PC-3 (cell line): ENCODE measurements at regions of chr19 and their contacts with region 1.

Region 1: DNA sequence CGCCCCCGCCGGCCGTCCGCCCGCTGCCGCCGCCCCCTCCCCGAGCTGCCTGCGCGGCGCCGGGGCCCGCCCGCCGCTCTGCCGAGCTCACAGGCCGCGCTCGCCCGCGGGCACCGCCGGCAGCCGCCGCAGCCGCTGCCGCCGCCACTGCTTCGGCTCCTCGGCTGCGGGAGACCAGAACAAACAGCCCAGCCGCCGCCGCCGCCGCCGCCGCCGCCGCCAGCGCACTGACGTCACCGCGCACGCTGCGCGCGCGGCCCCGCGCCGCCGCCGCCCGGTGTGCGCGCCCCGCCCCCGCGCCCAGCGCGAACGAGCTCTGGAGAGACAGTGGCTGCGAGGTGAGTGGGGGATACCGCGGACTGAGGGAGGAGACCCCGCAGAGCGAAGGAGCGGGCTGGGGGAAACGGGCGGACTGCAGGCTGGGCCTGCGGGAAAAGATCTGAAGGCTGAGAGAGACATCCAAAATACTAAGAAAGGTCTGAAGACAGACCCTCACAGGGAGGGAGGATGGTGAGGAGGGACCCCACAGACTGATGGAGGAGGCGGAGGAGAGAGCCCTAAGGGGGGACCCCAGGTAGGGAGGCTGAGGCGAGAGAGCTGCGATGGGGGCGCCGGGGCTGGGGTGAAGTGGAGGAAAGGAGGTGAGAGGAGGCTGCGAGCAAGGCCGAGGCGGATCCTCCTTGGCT is at the start of gene BRD4:
- DNase-seq: peak; percentile 62
- ATAC-seq: peak; percentile 46
- H3K4me3 ChIP-seq: peak within 1 kb of the TSS; percentile 99
- H3K27ac ChIP-seq: peak within 1 kb of the TSS; percentile 81
- H3K4me1 ChIP-seq: peaks cover 27% of the 10 kb centered on the region
- H3K27me3 ChIP-seq: no peaks in the 10 kb centered on the region
- CTCF ChIP-seq: no peak
- total RNA-seq, gene BRD4: 20.9 and 46.4 TPM in 2 replicates

Region 2: GRCh38 chr19:15234043-15234873 is 98.2 kb before region 1 on chr19:
- CTCF ChIA-PET with region 1: no interaction called
- POLR2A ChIA-PET with region 1: no interaction called
- intact Hi-C with region 1: no loop called
- DNase-seq: peak; percentile 93
- ATAC-seq: peak; percentile 80
- H3K4me3 ChIP-seq: no peak overlapping the region
- H3K27ac ChIP-seq: peak overlapping the region; percentile 92
- H3K4me1 ChIP-seq: peaks cover 22% of the 10 kb centered on the region
- H3K27me3 ChIP-seq: no peaks in the 10 kb centered on the region
- CTCF ChIP-seq: no peak

Region 3: DNA sequence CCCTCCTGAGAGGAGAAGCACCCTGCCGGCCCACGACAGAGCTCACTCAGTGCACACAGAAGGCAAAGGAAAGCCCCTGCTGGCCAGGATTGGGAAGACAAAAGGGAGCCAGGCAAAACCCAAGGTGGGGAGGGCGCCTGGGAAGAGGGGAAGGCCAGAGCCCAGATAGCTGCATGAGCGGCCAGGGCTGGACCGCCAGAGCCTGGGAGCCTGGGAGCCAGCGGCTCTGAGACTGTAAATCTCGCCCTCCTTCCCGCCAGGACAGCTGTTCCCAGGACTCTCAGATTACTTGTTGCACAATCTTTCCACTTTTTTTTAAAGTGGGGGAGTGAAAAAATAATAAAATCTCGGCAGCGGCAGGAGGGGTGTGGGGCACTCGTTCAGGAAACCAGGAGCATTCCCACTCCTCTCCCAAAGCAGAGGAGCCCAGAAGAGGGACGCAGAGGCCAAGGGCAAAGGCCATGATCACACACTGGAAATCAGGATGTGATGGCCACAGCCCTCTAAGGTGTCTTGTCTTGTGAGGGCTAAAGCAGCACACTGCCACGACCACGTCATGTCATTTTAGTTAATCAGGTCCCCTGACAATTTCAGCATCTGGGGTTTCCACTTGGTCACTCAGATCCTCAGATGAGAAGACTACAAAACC is 80.6 kb before region 1 on chr19:
- CTCF ChIA-PET with region 1: no interaction called
- POLR2A ChIA-PET with region 1: no interaction called
- intact Hi-C with region 1: no loop called
- DNase-seq: peak; percentile 55
- ATAC-seq: peak; percentile 36
- H3K4me3 ChIP-seq: no peak overlapping the region
- H3K27ac ChIP-seq: peak overlapping the region; percentile 60
- H3K4me1 ChIP-seq: peaks cover 31% of the 10 kb centered on the region
- H3K27me3 ChIP-seq: no peaks in the 10 kb centered on the region
- CTCF ChIP-seq: peak; percentile 55

Region 4: GRCh38 chr19:15264061-15264932 is 68.2 kb before region 1 on chr19:
- CTCF ChIA-PET with region 1: no interaction called
- POLR2A ChIA-PET with region 1: no interaction called
- intact Hi-C with region 1: loop called (anchors 5 kb)
- DNase-seq: peak; percentile 73
- ATAC-seq: peak; percentile 10; the same call in 1 of the 2 replicates
- H3K4me3 ChIP-seq: no peak overlapping the region
- H3K27ac ChIP-seq: no peak overlapping the region
- H3K4me1 ChIP-seq: 0 out of 2 replicates have a peak, but pooled peaks cover 6% of the 10 kb centered on the region
- H3K27me3 ChIP-seq: no peaks in the 10 kb centered on the region
- CTCF ChIP-seq: peak; percentile 91

Region 5: DNA sequence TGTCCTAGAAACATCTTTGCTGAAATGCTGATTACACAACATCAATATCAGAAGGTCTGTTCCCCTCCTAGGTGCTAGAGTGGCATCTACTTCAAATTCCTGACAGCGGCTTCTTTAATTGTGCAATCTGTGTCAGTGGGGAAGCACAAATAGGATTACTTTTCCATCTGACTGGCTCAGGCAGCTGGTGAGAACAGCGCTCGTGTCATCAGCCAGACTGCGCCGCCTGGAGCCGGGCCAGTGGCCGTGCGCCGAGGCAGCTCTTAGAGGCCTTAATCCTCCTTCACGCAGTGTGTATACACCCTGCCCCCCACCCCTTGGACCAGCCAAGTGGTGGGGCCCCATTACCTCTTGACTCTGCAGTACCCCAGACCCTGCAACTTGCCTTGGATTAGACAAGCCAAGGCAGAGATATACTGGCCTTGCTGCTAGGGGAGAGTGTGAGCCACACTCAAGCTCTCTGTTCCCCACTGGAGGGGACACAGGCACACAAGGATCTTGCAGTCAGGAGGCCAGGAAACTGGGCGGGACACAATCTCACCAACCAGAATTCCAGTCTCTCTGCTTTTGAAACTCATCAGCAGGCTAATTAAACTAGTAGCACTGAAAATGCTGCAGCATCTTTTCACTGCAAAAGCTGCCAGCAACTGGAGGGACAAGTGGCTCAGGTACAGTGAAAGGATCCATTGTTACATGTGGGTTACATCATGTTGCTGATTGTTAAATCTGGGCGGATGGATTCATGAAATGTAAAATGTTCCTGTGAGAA is 51.4 kb before region 1 on chr19:
- CTCF ChIA-PET with region 1: no interaction called
- POLR2A ChIA-PET with region 1: interaction called, 3 read pairs
- intact Hi-C with region 1: loop called (anchors 1 kb)
- DNase-seq: peak; percentile 23
- ATAC-seq: peak; percentile 17; the same call in 1 of the 2 replicates
- H3K4me3 ChIP-seq: no peak overlapping the region
- H3K27ac ChIP-seq: no peak overlapping the region
- H3K4me1 ChIP-seq: peaks cover 37% of the 10 kb centered on the region
- H3K27me3 ChIP-seq: no peaks in the 10 kb centered on the region
- CTCF ChIP-seq: no peak

Region 6: DNA sequence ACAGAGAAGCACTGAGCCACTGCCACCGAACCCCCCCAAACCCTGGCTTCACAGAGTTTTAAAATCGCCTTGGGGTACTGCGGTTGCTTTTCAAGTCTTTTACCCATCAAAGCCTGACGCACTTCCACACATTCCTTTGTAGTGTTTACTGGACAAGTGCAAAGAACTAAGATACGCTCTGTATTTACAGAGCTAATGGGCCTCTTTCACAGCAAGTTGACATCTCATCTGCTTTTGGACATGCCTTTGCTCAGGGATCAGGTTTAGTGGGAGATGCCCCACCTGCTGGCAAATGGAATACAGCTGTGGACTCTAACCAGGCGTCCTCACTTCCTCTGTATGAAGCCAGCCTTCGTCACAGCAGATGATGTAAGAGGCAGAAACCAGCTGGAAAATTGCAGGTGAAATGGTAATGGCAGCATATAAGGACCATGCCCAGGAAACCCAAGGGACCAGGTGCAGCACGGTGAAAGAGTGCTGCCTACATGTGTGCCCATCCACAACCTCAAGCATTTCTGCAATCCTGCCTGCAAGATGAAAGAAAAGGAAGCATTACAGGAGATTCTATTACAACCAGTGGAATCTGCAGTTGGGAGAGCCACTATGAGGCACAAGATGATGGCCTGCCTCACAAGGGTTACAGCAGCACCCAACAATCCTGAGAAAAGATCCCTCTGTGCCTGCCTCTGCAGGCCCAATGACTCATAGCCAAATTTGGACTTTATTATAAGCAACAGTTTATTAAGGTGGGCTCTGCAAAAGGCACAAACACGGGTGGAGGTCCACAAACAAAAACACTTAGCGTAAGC is 34.8 kb before region 1 on chr19:
- CTCF ChIA-PET with region 1: no interaction called
- POLR2A ChIA-PET with region 1: interaction called, 4 read pairs
- intact Hi-C with region 1: loop called (anchors 5 kb)
- DNase-seq: peak; percentile 47
- ATAC-seq: peak; percentile 77
- H3K4me3 ChIP-seq: peak overlapping the region; percentile 23; the same call in 1 of the 2 replicates
- H3K27ac ChIP-seq: peak overlapping the region; percentile 77
- H3K4me1 ChIP-seq: peaks cover 37% of the 10 kb centered on the region
- H3K27me3 ChIP-seq: no peaks in the 10 kb centered on the region
- CTCF ChIP-seq: peak; percentile 50

Region 7: DNA sequence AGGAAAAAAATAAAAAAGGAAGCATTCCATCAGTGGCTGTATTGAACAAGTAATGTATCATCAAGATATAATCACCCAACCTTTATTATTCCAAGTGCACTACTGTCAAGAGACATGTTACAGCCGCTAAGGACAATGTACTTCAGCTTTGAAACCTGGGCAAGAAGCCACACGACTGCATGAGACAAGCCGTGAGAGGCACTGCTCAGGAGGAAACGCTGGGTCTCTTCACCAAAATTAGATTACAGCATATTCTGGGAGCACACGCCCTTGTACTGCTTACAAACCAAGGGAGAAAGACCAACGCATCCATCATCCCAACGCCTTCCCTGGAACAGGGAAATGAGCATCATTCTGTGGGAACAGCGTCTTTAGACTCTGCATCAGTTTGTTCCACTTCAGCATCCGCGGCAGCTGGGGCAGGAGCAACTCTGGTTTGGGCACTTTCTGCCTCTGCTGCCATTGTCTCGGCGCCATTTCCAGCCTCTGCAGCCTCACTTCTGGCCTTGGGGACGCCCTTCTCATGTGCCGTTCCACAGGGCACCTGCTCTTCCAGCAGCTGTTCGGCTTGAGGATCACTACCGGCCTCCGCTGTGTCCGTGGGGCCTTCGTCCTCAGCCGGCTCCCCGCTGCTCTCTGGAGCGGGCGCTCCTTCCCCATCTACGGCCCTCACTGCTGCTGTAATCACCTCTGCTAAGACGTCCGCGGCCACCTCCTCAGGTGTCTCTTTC is 22.3 kb after region 1 on chr19:
- CTCF ChIA-PET with region 1: no interaction called
- POLR2A ChIA-PET with region 1: no interaction called
- intact Hi-C with region 1: no loop called
- DNase-seq: no peak
- ATAC-seq: no peak
- H3K4me3 ChIP-seq: no peak overlapping the region
- H3K27ac ChIP-seq: no peak overlapping the region
- H3K4me1 ChIP-seq: no peaks in the 10 kb centered on the region
- H3K27me3 ChIP-seq: no peaks in the 10 kb centered on the region
- CTCF ChIP-seq: no peak

Region 8: DNA sequence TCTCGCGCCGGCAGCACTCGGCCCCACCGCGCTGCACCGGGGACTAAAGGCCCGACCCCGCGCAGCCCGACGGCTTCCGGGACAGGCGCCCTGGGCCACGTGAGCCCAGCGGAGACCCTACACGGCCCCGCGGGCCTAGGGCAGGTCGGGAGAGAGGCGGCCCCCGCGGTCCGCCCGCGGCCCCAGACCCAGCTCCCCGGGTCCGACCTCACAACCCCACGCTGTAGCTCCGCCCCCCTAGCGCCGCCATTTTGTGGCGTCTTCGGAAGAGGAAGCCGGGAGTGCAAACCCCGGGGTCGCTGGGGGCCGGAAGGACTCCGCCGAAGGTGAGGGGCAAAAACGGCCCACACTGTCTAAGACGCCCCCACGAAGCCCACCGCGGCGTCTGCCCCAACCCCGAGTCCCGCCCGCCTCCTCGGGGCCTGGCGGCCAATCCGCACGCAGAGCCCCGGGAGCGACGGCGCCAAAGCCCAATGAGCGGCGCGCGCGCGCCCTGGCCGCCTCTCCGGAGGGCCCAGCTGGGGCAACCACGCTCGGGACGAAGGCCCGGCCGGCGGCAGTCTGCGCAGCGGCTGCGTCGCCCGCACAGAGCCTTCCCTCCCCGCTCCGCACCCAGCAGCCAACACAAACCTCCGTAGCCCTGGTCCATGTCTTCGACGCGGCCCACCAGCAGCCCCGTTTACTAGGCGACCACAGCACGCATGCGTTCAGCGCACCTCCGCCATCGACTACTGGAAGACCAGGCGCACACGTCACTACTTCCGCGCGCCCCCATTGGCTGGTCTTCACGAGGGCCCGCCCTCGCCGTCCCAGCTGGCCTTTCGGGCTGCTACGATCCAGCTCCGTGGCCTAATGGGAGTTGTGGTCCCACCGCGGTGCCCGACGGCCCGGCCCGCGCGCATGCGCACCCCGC is 46.9 kb after region 1 on chr19 and contains the start of gene AKAP8:
- CTCF ChIA-PET with region 1: no interaction called
- POLR2A ChIA-PET with region 1: interaction called, 13 read pairs
- intact Hi-C with region 1: no loop called
- DNase-seq: peak; percentile 99
- ATAC-seq: peak; percentile 87
- H3K4me3 ChIP-seq: peak within 1 kb of the TSS; percentile 88
- H3K27ac ChIP-seq: peak within 1 kb of the TSS; percentile 85
- H3K4me1 ChIP-seq: peaks cover 21% of the 10 kb centered on the region
- H3K27me3 ChIP-seq: no peaks in the 10 kb centered on the region
- CTCF ChIP-seq: no peak
- total RNA-seq, gene AKAP8: 36.3 and 48.0 TPM in 2 replicates

Region 9: DNA sequence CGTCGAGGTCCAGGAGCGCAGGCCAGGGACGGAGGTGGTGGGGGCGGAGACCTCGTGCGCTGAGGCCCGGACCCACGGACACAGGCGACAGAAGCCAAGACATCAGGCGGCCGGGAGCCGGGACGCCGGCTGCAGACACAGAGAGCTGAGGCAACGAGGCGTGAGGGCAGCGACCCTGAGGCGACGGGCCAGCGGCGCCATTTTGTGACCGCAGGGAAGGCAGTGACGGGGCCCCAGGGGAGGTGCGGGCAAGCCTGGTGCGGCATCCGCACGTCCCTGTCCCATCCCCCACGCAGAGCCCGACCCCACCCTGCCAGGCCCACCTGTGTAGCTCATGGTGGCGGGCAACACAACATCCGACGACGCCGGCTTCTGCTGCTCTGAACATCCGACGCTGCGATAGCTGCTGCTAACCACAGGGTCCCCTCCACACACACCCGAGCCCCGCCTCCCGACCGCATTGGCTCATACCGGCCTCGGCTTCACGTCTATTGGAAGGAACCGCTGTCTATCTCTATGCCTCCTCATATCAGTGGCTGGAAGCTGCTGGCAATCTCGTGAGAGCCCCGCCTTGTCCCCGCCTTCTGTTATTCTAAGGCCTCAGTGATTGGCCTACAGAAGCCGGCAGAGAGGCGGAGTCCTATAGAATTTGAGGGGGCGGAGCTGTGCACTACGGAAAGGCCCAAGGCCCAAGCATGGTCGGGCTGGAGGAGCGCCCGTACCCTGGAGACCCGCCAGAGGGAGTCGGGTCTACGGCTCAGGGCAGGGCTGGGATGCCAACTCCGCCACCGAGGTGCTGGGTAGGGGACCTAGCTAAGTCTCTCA is 86.3 kb after region 1 on chr19 and contains the start of gene AKAP8L:
- CTCF ChIA-PET with region 1: no interaction called
- POLR2A ChIA-PET with region 1: no interaction called
- intact Hi-C with region 1: no loop called
- DNase-seq: peak; percentile 99
- ATAC-seq: peak; percentile 92
- H3K4me3 ChIP-seq: peak within 1 kb of the TSS; percentile 97
- H3K27ac ChIP-seq: peak within 1 kb of the TSS; percentile 45
- H3K4me1 ChIP-seq: peaks cover 23% of the 10 kb centered on the region
- H3K27me3 ChIP-seq: no peaks in the 10 kb centered on the region
- CTCF ChIP-seq: peak; percentile 64
- total RNA-seq, gene AKAP8L: 97.9 and 137 TPM in 2 replicates